Endothelial cell of umbilical vein (primary cell): ENCODE measurements at regions of chr7 and their contacts with region 1.

Region 1: DNA sequence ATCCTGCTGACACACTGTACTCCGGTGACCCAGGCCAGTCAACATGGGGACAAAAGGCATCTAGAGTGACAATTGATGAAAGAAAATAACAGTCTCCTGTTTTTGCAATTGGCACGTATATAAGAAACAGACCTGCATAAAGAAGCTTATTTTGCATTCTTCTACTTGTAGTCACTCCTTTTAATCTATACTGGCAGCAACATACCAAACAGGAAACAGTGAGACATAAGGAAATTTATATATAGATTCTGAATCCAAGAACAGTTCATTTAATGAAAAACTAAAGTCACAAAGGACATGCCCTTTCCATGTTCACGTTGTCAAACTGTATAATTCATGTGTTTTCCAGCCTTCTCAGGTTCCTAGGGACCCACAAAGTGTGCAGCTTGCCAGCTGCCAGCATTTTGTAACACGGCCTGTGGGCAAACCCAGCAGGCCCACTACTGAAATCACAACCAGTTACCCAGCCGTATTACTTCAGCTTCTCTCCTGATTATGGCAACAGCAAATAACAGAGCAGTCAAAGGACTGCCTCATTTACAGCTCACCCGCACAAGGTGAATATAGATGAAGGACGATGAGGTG is 72.3 kb downstream of the AMPH start:
- DNase-seq: peak; percentile 75
- H3K4me3 ChIP-seq: no peak overlapping the region
- H3K27ac ChIP-seq: peak overlapping the region; percentile 57
- H3K4me1 ChIP-seq: peaks cover 38% of the 10 kb centered on the region
- H3K27me3 ChIP-seq: no peaks in the 10 kb centered on the region
- CTCF ChIP-seq: no peak
- POLR2A ChIP-seq: no peak

Region 2: DNA sequence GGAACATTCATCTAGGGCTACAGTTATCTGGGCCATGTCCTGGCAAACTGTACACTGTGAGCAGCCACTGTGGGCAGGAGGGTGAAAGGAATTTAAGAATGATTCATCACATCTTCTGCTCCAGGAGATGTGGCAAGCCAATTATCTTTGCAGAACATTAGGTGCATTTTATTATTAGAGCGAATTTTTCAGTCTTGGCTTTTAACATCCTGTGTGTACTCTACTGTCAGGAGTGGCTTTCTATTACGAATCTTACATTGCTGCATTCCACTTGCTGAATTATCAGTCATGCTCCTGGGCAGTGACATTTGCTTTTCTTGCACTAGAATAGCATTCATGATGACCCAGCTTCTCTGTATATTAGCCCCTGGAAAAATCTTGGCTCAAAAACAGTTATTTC is 176.2 kb before region 1 on chr7:
- CTCF ChIA-PET with region 1: no interaction called
- POLR2A ChIA-PET with region 1: no interaction called
- dilution Hi-C with region 1: no loop called
- intact Hi-C with region 1: loop called (anchors 5 kb)
- DNase-seq: peak; percentile 76
- H3K4me3 ChIP-seq: no peak overlapping the region
- H3K27ac ChIP-seq: peak overlapping the region; percentile 75
- H3K4me1 ChIP-seq: peaks cover 50% of the 10 kb centered on the region
- H3K27me3 ChIP-seq: no peaks in the 10 kb centered on the region
- CTCF ChIP-seq: no peak
- POLR2A ChIP-seq: no peak